RWPE1 (cell line): ENCODE measurements at regions of chr6 and their contacts with region 1.

Region 1: GRCh38 chr6:105431226-105431625 is 28.3 kb upstream of the PREP start:
- DNase-seq: peak; percentile 46
- H3K27ac ChIP-seq: no peak overlapping the region
- CTCF ChIP-seq: peak; percentile 64

Region 2: DNA sequence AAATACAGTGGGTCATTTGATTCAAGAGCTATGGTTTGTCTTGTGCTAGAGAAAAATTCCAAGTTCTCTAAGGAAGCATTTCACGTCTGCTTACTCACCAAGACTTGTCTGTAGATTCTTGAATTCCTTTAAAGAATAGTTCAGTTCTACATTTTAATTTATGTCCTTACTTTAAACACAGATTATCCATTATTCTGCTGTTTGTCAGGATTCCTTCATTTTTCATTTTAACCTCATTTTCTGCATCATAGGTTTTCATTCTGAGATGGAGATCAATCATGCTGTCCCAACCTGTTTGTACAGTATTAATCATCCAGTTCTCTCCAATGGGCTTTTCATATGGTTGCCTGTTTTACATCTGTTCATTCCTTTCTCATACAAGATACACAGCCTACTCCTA is 226.9 kb before region 1 on chr6:
- CTCF ChIA-PET with region 1: no interaction called
- POLR2A ChIA-PET with region 1: no interaction called
- DNase-seq: no peak
- H3K27ac ChIP-seq: no peak overlapping the region
- CTCF ChIP-seq: no peak

Region 3: DNA sequence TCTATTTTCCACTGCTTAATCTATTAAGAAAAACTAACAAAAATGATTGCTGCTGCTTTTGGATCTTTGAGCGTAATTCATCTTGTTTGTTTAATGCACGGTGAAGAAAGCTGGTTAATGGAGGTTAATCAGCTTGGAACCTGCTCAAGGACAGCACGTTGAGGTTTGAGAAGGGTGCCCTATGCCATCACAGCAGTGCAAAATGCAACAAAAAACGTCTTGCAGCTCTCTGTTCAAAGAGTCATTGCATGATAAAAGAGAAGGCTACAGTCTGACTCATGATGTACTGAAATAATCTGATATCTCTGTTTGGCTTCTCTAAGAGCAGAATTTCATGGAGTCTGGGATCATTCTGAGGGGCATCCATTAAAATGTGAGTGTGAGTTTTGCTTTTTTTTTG is 52.3 kb after region 1 on chr6:
- CTCF ChIA-PET with region 1: interaction called, 12 read pairs
- POLR2A ChIA-PET with region 1: no interaction called
- DNase-seq: no peak
- H3K27ac ChIP-seq: no peak overlapping the region
- CTCF ChIP-seq: no peak

Region 4: DNA sequence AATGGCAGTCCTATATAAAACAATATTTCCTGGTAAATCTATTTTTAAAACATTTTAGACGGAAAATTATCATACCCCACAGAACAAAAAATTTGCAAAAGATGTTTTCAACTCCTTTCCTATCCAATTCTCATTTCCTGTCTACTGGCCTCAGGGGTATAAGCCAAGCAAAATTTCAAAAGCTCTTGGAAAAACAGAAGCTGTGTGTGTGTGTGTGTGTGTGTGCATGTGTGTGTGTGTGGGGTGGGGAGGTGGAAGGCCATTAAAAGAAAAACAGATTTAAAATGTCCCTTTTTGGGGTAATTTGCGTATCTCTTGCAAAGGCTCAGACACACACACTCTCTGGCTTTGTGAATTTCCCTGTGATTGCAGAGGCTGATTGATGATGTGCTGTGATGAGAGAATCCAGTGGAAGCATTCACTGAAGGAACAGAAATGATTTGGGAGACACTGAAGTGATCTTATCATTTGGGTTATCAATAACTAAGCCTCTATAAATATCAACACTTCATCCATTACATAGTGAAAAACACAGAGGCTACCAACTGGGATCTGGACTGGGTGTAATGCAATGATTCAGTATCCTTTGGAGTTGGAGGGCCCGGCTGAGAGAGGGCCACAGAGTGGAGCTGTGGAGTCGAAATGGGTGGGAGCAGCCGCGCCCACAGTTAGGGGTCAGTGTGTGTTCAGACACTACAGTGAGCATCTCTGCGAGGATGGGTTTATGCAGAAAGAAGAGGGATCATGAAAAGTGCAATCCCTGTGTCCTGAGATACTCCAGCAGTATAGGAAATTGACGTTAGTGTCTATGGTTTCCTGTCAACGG is 78.5 kb after region 1 on chr6:
- CTCF ChIA-PET with region 1: no interaction called
- POLR2A ChIA-PET with region 1: no interaction called
- DNase-seq: no peak
- H3K27ac ChIP-seq: no peak overlapping the region
- CTCF ChIP-seq: no peak

Region 5: DNA sequence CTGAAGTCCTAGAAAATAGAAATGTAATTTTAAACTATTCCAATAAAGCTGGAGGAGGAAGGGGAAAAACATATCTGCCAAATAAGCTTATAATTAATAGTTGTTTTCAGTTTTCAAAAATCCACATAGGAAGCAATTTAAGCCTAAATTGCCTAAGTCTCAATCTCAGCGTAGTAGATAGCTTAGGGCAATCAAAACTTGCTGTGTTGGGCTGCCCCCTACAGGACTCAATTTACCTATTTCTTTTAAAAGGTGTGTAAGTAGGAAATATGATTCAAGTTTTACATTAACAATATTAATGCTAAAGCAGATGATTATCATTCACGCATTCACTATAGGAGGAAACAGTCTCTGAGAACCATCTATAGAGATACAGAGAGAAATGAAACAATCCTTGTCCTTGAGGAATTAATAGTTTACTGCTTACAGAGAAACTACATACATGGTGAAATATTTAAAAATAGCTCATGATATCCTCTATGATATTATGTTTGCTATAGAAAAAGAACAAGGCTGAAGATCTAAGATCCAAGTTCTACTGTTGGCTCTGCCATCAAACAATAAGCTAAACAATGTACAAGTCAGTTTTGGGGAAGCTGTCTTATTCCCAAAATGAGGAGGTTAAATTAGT is 792.2 kb after region 1 on chr6:
- CTCF ChIA-PET with region 1: interaction called, 12 read pairs
- POLR2A ChIA-PET with region 1: no interaction called
- DNase-seq: peak; percentile 29
- H3K27ac ChIP-seq: no peak overlapping the region
- CTCF ChIP-seq: peak; percentile 64